ENCODE measurements at regions of chr15 and their contacts with region 1.

Region 1: GRCh38 chr15:52331490-52332240 is 36.1 kb upstream of the MYO5C start:
- DNase-seq: peak; percentile 75
- ATAC-seq: peak; percentile 99
- H3K4me3 Mint-ChIP-seq: no peak overlapping the region
- H3K27ac Mint-ChIP-seq: peak overlapping the region; percentile 74
- H3K4me1 Mint-ChIP-seq: peaks cover 20% of the 10 kb centered on the region
- H3K27me3 Mint-ChIP-seq: no peaks in the 10 kb centered on the region
- CTCF ChIP-seq: peak; percentile 71

Region 2: GRCh38 chr15:52528991-52529926 is 197.6 kb after region 1 on chr15:
- CTCF ChIA-PET with region 1: interaction called, 3 read pairs
- POLR2A ChIA-PET with region 1: no interaction called
- intact Hi-C with region 1: loop called (anchors 5 kb)
- DNase-seq: peak; percentile 83
- ATAC-seq: peak; percentile 88
- H3K4me3 Mint-ChIP-seq: peak overlapping the region; percentile 76
- H3K27ac Mint-ChIP-seq: peak overlapping the region; percentile 88
- H3K4me1 Mint-ChIP-seq: peaks cover 30% of the 10 kb centered on the region
- H3K27me3 Mint-ChIP-seq: peaks cover 8% of the 10 kb centered on the region
- CTCF ChIP-seq: no peak

Region 3: GRCh38 chr15:52679232-52680040 is 347.8 kb after region 1 on chr15 and contains the start of gene ATOSA:
- CTCF ChIA-PET with region 1: interaction called, 6 read pairs
- POLR2A ChIA-PET with region 1: no interaction called
- intact Hi-C with region 1: loop called (anchors 5 kb)
- DNase-seq: peak; percentile 94
- ATAC-seq: peak; percentile 79
- H3K4me3 Mint-ChIP-seq: peak within 1 kb of the TSS; percentile 99
- H3K27ac Mint-ChIP-seq: peak within 1 kb of the TSS; percentile 99
- H3K4me1 Mint-ChIP-seq: peaks cover 38% of the 10 kb centered on the region
- H3K27me3 Mint-ChIP-seq: no peaks in the 10 kb centered on the region
- CTCF ChIP-seq: no peak
- total RNA-seq, gene ATOSA: 13.1 TPM

Region 4: DNA sequence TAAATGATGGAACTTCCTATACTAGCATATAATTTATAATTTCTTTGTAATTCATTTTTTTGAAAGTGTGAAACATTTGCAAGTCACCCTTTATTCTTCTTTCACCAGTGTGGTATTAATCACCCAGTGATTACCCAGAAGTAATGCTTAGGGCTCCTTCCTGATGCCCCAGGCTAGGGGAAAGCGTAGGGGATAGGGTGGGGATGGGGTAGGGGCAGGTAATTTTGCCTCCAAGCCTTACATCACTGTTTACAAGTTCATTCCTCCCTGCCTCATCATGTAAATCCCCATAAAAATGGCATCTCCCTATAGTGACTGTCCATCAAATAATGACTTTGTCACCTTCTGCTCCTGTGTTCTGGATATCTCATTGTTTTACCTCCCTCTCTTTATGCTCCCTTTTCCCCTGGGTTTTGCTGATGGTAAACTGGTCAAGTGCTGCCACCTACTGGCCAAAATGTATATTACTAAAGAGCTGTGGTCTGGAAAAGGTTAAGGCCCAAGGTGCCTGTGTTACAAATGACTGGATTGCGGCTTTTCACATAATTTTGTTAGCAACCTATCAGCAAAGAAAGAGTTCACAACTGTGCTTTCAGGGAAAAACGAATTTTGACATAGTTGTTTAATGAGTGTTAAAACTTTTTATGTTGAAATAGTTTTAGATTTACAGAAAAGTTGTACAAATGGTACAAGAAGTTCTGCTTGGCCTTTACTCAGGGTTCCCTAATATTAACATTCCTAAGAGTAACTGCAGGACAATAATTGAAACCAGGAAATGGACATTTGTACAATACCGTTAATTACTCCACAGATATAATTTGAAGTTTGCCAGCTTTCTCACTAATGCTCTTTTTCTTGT is 403.8 kb after region 1 on chr15:
- CTCF ChIA-PET with region 1: interaction called, 23 read pairs
- POLR2A ChIA-PET with region 1: no interaction called
- intact Hi-C with region 1: loop called (anchors 1 kb)
- DNase-seq: peak; percentile 81
- ATAC-seq: peak; percentile 92
- H3K4me3 Mint-ChIP-seq: no peak overlapping the region
- H3K27ac Mint-ChIP-seq: no peak overlapping the region
- H3K4me1 Mint-ChIP-seq: peaks cover under 1% of the 10 kb centered on the region
- H3K27me3 Mint-ChIP-seq: no peaks in the 10 kb centered on the region
- CTCF ChIP-seq: peak; percentile 90